Natural killer cell (primary cell): ENCODE measurements at regions of chr3 and their contacts with region 1.

Region 1: DNA sequence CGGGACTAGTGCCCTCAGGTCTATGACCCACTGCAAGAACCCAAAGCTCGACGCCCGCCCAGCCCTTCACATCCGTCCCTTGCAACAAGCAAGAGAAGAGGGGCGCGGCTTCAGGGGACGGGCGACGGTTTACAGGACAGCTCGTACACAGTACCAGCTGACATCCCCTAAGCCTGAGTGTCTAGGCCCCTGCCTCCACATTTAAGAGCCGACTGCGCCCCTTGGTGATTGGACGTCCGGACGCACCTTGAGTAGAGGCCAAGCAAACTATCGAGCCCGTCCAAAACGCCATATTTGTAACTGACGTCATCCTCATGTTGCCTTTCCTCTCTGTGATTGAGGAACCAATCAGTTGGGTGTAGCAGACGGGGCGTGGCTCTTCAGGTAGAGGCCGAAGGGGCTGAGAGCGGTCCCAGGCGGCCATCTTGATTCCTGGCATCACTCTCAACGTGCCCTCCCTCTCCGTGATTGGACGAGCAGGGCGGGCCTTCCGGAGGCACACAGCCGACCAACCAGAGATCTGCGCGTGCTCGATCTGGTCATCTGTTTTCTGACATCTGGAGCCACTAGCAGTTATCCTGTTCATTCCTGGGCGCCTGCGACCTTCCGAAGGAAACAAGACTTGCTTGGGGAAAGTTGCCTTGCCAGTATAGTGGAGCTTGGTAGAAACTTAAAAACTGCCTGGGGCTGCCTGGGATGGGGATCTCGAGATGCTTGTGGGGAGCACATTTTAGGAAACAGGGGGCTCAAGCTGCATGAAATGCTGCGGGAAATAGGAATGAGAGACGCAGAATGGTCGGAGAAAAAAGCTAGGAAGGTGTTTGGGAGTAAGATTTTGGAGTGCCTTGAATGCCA is 4.0 kb upstream of the RPL14 start:
- DNase-seq: peak; percentile 91 to 99
- ATAC-seq: peak; percentile 88 to 97 (median 88)
- H3K4me3 ChIP-seq: peak overlapping the region; percentile 75
- H3K4me3 Mint-ChIP-seq: peak overlapping the region; percentile 96
- H3K27ac ChIP-seq: peak overlapping the region; percentile 95
- H3K27ac Mint-ChIP-seq: peak overlapping the region; percentile 93 to 99
- H3K4me1 ChIP-seq: peaks cover 23% of the 10 kb centered on the region
- H3K4me1 Mint-ChIP-seq: peaks cover 39 to 49% of the 10 kb centered on the region in 2 donors
- H3K27me3 ChIP-seq: no peaks in the 10 kb centered on the region
- H3K27me3 Mint-ChIP-seq: no peaks in the 10 kb centered on the region
- CTCF ChIP-seq: no peak

Region 2: DNA sequence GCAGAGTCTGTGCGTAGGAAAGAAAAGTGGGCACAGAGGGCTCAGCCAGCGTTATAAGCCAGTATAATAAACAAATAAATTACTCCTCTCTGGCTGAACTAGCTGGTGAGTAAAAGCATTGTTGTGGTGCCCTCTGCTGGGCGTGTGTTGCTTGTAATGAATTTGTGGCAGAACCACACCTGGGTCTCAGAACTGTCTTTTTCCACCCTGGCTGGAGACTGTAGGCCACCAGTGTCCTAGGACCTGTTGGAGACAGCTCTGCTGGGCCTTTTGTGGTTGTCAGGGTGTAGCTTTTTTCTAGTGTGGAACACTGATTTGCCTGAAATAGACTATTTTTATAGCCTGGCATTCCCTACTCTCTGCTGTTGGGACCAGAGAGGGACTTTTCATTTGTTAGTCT is 274.1 kb before region 1 on chr3:
- intact Hi-C with region 1: no loop called
- DNase-seq: peak; percentile 31 to 63
- ATAC-seq: peak in 1 of 3 donors; percentile 64
- H3K4me3 ChIP-seq: no peak overlapping the region
- H3K4me3 Mint-ChIP-seq: no peak overlapping the region
- H3K27ac ChIP-seq: no peak overlapping the region
- H3K27ac Mint-ChIP-seq: no peak overlapping the region
- H3K4me1 ChIP-seq: no peaks in the 10 kb centered on the region
- H3K4me1 Mint-ChIP-seq: peaks cover 0 to 5% of the 10 kb centered on the region in 2 donors
- H3K27me3 ChIP-seq: no peaks in the 10 kb centered on the region
- H3K27me3 Mint-ChIP-seq: no peaks in the 10 kb centered on the region
- CTCF ChIP-seq: peak; percentile 65

Region 3: DNA sequence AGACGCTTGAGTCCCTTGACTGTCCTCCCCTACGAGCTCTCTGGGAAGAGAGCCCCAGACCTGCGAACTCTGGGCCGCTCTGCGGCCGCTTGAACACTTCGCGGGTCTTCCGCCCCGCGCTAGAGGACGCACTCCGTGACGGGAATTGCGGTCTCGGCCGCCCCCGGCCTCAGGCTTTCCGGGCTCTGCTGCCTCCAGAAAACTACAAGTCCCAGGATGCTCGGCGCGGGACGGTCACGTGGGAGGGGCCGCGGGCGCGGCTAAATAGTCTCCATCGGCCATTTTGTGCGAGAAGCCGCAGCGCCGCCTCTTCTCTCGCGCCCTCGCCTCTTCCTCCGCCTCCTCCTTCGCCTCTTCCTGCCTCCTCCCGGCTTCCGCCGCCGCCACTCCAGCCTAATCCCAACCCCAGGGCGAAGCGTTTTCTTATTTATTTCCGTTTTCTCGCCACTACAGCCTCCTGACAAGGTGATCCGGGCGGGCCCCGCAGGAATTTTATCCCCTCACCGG is 143.6 kb before region 1 on chr3 and contains the start of gene EIF1B:
- intact Hi-C with region 1: loop called (anchors 1 kb)
- DNase-seq: peak; percentile 98 to 99
- ATAC-seq: peak; percentile 90 to 97 (median 94)
- H3K4me3 ChIP-seq: peak within 1 kb of the TSS; percentile 87
- H3K4me3 Mint-ChIP-seq: peak within 1 kb of the TSS; percentile 100
- H3K27ac ChIP-seq: peak within 1 kb of the TSS; percentile 88
- H3K27ac Mint-ChIP-seq: peak within 1 kb of the TSS; percentile 98 to 99
- H3K4me1 ChIP-seq: peaks cover 10% of the 10 kb centered on the region
- H3K4me1 Mint-ChIP-seq: peaks cover 28 to 30% of the 10 kb centered on the region in 2 donors
- H3K27me3 ChIP-seq: no peaks in the 10 kb centered on the region
- H3K27me3 Mint-ChIP-seq: no peaks in the 10 kb centered on the region
- CTCF ChIP-seq: peak; percentile 74
- total RNA-seq, gene EIF1B: 52.9 to 67.3 (median 55.1) TPM

Region 4: DNA sequence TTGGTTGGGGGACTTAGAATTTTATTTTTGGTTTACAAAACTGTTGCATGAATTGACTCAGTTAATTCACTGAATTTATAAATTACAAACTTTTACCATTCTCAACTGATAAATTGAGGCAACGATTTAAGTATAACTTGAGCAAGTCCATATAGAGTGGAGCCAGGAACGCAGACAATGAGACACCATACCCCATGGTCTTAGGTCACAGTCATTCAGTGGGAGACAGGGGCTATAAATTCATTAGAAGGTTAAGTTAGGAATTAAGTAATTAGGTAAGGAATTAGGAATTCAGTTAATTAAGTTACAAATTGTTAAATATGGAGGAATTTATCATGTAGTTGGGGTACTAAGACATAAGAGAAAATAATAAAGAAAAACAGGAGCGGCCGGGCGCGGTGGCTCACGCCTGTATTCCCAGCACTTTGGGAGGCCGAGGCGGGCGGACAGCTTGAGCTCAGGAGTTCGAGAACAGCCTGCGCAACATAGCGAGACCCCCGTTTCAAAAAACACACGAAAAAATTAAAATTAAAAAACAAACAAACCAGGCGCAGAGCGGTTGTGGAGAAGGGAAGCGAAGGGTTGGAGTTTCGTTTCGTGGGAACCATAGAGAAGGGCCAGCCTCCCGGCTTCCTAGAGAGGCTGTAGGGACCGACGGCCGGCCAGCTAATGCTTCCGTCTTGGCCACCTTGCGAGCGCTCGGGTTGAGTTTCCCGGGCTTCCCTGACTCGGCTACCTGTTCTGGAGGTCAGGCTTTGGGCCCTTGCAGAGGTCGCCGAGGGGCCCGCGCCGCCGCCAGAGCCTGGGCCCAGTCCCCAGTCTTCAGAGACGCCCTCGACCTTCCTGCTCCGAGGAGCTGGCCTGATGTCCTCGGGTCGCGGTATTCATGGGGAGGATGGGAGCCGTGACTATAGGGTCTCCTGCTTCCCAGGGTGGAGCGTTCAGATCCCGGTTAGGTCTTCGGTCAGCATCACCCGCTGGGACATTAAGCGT is 23.7 kb after region 1 on chr3 and contains the start of gene ZNF619:
- intact Hi-C with region 1: loop called (anchors 1 kb)
- DNase-seq: peak; percentile 63 to 79
- ATAC-seq: peak; percentile 96 to 97 (median 97)
- H3K4me3 ChIP-seq: peak within 1 kb of the TSS; percentile 76
- H3K4me3 Mint-ChIP-seq: peak within 1 kb of the TSS; percentile 97
- H3K27ac ChIP-seq: peak within 1 kb of the TSS; percentile 84
- H3K27ac Mint-ChIP-seq: peak within 1 kb of the TSS; percentile 95 to 97
- H3K4me1 ChIP-seq: peaks cover 12% of the 10 kb centered on the region
- H3K4me1 Mint-ChIP-seq: peaks cover 21 to 30% of the 10 kb centered on the region in 2 donors
- H3K27me3 ChIP-seq: no peaks in the 10 kb centered on the region
- H3K27me3 Mint-ChIP-seq: no peaks in the 10 kb centered on the region
- CTCF ChIP-seq: no peak
- total RNA-seq, gene ZNF619: 9.5 to 14.3 (median 10.9) TPM

Region 5: DNA sequence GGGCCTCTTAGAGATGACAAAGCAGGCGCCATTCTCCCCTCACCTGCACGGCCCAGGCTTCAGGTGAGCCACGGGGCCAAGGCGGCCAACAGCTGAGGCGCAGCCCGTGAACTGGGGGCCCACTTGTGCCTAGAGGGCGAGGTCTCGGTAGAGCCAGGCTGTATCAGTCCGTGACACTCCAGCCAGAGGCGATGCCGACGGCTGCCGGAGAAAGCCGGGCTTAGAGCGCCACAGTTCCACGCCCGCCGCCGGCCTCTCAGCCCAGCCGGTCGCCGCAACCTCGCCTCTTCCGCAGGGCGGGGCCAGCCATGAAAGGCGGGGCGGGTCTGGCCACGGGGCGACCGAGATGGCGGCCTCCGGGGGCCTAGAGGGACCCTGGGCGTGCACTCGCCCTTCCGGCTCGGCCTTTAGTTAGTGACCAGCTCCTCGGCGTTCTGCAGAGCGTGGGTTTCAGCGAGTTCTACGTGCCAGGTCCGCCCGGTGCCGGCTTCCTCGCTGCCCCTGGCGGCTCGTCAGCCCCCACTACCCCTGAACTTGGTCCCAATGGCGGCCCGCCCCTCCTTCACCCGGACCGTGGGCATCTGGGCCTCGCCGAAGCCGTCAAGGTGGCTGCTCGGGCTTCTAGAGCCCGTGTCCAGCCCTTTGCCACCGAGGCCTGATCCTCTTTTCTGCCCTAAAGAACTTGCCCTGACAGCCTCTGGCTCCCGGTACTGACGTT is 71.6 kb after region 1 on chr3 and contains the start of gene ZNF621:
- intact Hi-C with region 1: loop called (anchors 1 kb)
- DNase-seq: peak; percentile 86
- ATAC-seq: peak; percentile 98 to 99 (median 98)
- H3K4me3 ChIP-seq: peak within 1 kb of the TSS; percentile 96
- H3K4me3 Mint-ChIP-seq: peak within 1 kb of the TSS; percentile 97
- H3K27ac ChIP-seq: peak within 1 kb of the TSS; percentile 93
- H3K27ac Mint-ChIP-seq: peak within 1 kb of the TSS; percentile 95 to 98
- H3K4me1 ChIP-seq: peaks cover 14% of the 10 kb centered on the region
- H3K4me1 Mint-ChIP-seq: peaks cover 24 to 43% of the 10 kb centered on the region in 2 donors
- H3K27me3 ChIP-seq: no peaks in the 10 kb centered on the region
- H3K27me3 Mint-ChIP-seq: no peaks in the 10 kb centered on the region
- CTCF ChIP-seq: no peak
- total RNA-seq, gene ZNF621: 27.7 to 33.5 (median 31.0) TPM

Region 6: DNA sequence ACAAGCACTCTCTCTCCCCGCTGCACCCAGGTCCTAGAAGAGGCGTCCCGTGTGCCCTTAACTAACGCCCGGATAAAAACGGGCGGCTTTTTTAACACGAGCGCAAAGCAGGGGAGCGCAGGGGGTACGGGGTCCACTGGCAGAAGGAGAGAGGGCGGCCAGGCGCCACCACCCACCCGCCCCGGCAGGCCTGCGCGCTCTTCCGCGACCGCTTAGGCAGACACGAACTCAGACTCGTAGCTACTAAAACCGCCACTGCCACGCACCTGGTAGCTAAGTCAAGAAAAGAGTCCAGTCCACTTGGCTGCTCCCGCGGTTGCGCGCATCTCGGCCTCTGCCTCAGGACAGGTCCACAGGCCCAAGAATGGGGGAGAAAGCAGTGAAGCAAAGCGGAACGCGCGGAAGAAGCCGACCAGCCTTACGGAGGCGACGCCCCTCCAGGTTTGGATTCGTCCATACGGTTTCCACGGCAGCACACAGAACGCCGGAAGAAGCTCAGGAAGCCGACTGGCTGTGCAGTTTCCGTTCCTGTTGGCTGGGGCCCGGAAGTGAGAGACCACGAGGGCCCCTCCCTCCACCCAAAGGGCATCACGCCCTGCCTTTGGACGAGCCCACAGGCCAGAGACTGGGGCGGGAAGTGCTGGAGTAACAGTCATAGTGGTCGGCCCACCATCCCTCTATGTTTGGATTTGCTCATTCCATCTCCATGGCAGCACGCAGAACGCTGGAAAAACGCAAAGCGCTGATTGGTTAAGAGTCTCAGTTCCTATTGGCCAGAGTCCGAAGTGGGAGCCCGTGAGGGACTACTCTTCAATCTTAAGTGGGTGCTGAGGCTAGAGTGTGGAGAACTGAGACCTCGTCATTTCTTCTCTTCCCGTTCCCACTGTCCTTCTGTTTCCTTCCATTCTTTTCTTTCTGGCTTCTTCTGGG is 1508.9 kb after region 1 on chr3 and contains the start of gene ULK4:
- intact Hi-C with region 1: loop called (anchors 5 kb)
- DNase-seq: peak; percentile 90 to 98
- ATAC-seq: peak; percentile 87 to 98 (median 89)
- H3K4me3 ChIP-seq: peak within 1 kb of the TSS; percentile 97
- H3K4me3 Mint-ChIP-seq: peak within 1 kb of the TSS; percentile 99
- H3K27ac ChIP-seq: peak within 1 kb of the TSS; percentile 96
- H3K27ac Mint-ChIP-seq: peak within 1 kb of the TSS; percentile 93 to 97
- H3K4me1 ChIP-seq: peaks cover 15% of the 10 kb centered on the region
- H3K4me1 Mint-ChIP-seq: peaks cover 24% of the 10 kb centered on the region in 2 donors
- H3K27me3 ChIP-seq: no peaks in the 10 kb centered on the region
- H3K27me3 Mint-ChIP-seq: no peaks in the 10 kb centered on the region
- CTCF ChIP-seq: no peak
- total RNA-seq, gene ULK4: 19.2 to 25.7 (median 21.2) TPM

Region 7: DNA sequence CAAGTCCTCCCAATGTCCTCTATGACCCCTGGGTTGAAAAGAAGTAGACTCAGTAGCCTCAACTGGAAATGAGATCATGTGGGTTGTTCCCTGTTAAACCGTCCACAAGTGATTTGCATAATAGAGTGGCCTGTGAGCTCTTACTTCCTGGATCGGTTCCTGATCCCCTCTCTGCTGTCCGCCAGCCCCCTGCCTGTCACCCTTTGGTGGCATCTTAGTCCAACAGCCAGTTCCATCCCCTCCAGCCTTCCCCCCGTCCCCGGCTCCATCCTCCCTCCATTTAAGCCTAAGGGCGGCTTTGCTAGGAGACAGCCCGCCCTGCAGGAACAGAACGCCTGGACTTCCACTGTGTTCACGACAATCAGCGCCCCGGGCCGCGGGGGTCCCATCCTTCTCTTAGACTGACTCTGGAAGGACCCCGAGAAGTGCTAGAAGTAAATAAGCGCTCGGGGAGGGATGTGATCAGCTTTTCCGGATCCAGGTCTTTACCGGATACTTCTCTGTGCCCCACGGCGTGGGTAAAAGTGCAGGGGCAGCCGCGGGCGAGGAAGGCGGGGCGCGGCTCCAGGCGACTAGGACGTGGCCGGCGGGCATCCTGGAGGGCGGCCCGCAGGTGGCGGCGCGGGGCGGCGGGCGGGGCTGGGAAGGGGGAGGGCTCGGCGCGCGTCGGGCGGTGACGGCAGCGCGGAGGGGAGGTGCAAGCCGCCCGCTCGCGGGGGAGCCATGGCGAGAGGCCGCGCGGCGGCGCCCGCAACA is 1560.0 kb after region 1 on chr3:
- intact Hi-C with region 1: loop called (anchors 5 kb)
- DNase-seq: peak; percentile 69 to 87
- ATAC-seq: peak; percentile 72 to 88 (median 79)
- H3K4me3 ChIP-seq: peak overlapping the region; percentile 64
- H3K4me3 Mint-ChIP-seq: peak overlapping the region; percentile 92
- H3K27ac ChIP-seq: peak overlapping the region; percentile 98
- H3K27ac Mint-ChIP-seq: peak overlapping the region; percentile 76 to 83
- H3K4me1 ChIP-seq: peaks cover 24% of the 10 kb centered on the region
- H3K4me1 Mint-ChIP-seq: peaks cover 25 to 39% of the 10 kb centered on the region in 2 donors
- H3K27me3 ChIP-seq: no peaks in the 10 kb centered on the region
- H3K27me3 Mint-ChIP-seq: no peaks in the 10 kb centered on the region
- CTCF ChIP-seq: no peak